Gastrocnemius medialis (tissue), 4 donors: ENCODE measurements at regions of chr12 and their contacts with region 1.

Region 1: DNA sequence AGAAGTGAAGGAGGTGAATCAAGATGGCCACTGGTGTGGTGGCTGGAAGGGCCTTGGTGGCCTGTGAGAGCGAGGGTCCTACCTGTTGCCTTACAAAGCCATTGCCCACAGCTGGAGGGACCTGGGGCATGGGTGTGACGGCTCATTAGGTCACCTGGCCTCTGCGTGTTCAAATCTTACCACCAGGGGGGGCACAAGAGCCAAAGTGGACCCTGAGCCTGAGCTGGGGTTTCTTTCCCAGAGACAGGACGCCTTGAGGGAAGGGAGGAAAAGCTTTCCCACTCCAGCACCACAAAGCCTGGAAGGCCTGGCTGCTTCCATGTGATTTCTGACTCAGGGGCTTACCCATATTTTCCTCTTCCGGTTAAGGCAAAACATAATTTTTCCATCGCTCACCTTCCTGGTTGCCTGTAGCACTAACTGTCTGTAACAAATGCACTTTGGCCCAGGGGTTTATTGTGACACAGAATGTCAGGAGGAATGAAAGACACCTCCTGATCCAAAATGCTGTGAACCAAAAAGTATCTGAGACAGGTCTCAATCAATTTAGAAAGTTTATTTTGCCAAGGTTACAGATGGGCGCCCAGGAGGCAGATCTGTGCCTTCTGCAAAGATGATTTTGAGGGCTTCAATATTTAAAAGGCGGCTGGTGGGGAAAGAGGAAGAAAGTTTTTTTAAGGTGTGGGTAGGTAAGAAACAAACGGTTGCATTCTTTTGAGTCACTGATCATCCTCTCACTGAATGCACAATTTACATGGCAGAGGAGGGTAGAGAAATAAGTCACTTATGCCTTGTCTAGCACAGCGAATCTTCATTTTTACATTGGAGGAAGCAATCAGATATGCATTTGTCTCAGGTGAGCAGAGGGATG is 4.3 kb upstream of the CD9 start:
- DNase-seq: peak; percentile 70 to 84
- ATAC-seq: peak; percentile 91 to 92
- H3K4me3 ChIP-seq: no peak overlapping the region
- H3K27ac ChIP-seq: peak overlapping the region; percentile 21 to 66 (median 57)
- H3K4me1 ChIP-seq: peaks cover 4 to 5% of the 10 kb centered on the region in 2 donors
- H3K27me3 ChIP-seq: no peaks in the 10 kb centered on the region
- CTCF ChIP-seq: peak; percentile 95 to 97 (median 96)
- POLR2A ChIP-seq: no peak

Region 2: DNA sequence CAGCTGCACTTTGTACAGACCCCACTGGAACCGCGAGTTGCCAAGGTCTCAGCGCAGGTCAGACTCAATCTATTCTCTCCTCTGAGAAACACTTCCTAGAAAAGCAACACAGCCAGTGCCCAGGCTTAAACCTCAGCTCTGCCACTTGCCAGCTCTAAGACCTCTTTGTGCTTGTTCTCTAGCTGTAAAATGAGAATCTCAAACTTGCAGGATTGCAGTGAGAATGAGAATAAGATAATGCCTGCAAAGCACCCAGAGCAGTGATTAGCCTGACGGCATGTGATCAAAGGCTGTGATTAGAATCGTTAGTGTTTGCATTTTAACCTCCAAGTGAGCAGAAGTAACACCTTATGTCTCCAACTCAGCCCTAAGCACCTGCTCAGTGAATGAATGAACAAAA is 272.1 kb before region 1 on chr12:
- in situ Hi-C with region 1: no loop called
- intact Hi-C with region 1: no loop called
- DNase-seq: no peak
- ATAC-seq: no peak
- H3K4me3 ChIP-seq: no peak overlapping the region
- H3K27ac ChIP-seq: no peak overlapping the region
- H3K4me1 ChIP-seq: no peaks in the 10 kb centered on the region
- H3K27me3 ChIP-seq: no peaks in the 10 kb centered on the region
- CTCF ChIP-seq: no peak
- POLR2A ChIP-seq: no peak

Region 3: GRCh38 chr12:5988659-5989116 is 207.2 kb before region 1 on chr12:
- in situ Hi-C with region 1: no loop called
- intact Hi-C with region 1: loop called (anchors 10 kb)
- DNase-seq: peak; percentile 22 to 48
- ATAC-seq: peak; percentile 74 to 85
- H3K4me3 ChIP-seq: no peak overlapping the region
- H3K27ac ChIP-seq: no peak overlapping the region
- H3K4me1 ChIP-seq: peaks cover 0 to 3% of the 10 kb centered on the region in 2 donors
- H3K27me3 ChIP-seq: no peaks in the 10 kb centered on the region
- CTCF ChIP-seq: peak; percentile 82 to 94 (median 86)
- POLR2A ChIP-seq: no peak

Region 4: DNA sequence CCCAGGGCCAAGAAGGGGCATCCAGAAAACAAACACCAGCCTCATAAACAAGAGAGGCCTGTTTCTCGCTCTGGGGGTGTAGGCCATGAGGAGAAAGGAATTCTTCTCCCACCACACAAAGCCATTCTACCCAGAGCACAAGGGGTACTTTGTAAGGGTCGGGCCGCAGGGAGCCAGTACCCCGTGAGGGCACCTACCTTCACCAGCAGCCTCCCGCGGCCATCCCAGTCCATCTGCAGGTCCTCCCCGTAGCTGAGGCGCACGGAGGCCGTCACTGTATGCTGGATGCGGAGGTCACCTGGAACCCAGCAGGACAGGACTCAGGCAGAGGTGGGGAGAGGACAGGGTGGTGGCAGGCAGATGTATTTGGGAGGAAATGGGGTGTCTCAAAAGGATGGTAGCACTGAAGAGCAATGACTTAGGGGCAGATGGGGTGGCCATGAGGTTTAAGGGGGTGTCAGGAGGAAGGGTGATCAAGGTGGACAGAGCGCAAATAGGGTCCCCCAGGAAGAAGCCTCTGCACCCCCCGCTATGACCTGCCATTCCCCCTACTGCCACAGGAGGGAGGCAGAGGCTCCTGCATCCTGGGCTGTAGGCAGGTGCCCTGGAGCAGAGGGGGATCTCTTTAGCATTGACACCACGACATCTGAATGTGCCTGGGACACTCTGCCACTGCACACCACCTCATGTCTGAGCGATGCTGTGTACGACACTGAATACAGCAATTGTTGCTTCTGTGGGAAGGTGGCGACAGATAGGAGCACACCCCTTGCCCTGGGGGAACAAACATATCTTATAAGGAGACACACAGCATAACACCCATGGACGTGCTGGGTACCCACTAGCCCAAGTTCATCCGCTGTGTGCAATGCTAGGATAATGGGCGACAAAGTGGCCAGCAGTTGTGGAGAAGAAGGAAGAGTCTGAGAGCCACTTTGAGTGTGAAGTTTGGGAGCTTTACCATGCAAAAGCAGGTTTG is 132.9 kb before region 1 on chr12:
- in situ Hi-C with region 1: loop called in 1 of 4 experiments (anchors 10 kb)
- intact Hi-C with region 1: loop called (anchors 2 kb)
- DNase-seq: peak in 1 of 2 donors; percentile 15
- ATAC-seq: peak; percentile 45 to 54
- H3K4me3 ChIP-seq: no peak overlapping the region
- H3K27ac ChIP-seq: no peak overlapping the region
- H3K4me1 ChIP-seq: no peaks in the 10 kb centered on the region
- H3K27me3 ChIP-seq: no peaks in the 10 kb centered on the region
- CTCF ChIP-seq: peak; percentile 67 to 77 (median 75)
- POLR2A ChIP-seq: no peak

Region 5: GRCh38 chr12:6233121-6233971 is 37.4 kb after region 1 on chr12:
- in situ Hi-C with region 1: no loop called
- intact Hi-C with region 1: loop called (anchors 2 kb)
- DNase-seq: peak; percentile 82 to 93
- ATAC-seq: peak; percentile 71 to 73
- H3K4me3 ChIP-seq: peak overlapping the region in 3 of 4 donors; percentile 4 to 36 (median 26)
- H3K27ac ChIP-seq: peak overlapping the region; percentile 82 to 89 (median 86)
- H3K4me1 ChIP-seq: peaks cover 59 to 77% of the 10 kb centered on the region in 2 donors
- H3K27me3 ChIP-seq: no peaks in the 10 kb centered on the region
- CTCF ChIP-seq: no peak
- POLR2A ChIP-seq: peak; percentile 35 to 53

Region 6: GRCh38 chr12:6278439-6279255 is 82.7 kb after region 1 on chr12:
- in situ Hi-C with region 1: loop called in 1 of 4 experiments (anchors 5 kb)
- intact Hi-C with region 1: loop called (anchors 1 kb)
- DNase-seq: peak; percentile 66 to 82
- ATAC-seq: peak; percentile 81 to 89
- H3K4me3 ChIP-seq: peak overlapping the region; percentile 53 to 74 (median 54)
- H3K27ac ChIP-seq: peak overlapping the region; percentile 79 to 98 (median 90)
- H3K4me1 ChIP-seq: peaks cover 19 to 30% of the 10 kb centered on the region in 2 donors
- H3K27me3 ChIP-seq: no peaks in the 10 kb centered on the region
- CTCF ChIP-seq: peak in 4 of 5 experiments; percentile 73 to 100 (median 100)
- POLR2A ChIP-seq: peak; percentile 64 to 67

Region 7: DNA sequence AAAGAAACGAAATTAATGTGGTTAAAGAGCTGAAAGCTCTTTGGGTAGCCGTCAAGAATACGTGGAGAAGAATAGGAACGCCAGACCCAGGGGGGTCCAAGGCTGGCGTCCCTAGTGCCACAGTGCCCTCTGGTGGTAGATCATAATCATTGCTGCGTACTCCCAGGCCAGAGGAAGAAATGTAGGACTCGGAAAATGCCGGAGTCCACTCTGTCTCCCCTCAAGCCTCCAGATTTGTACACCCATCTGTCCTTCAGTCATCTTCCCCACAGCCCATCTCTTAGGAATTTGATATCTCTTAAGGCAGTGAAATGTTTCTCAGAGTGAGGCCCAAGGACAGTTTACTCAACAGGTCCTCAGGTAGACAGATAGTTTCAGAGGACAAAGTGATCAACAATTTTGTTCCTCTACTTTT is 89.2 kb after region 1 on chr12:
- in situ Hi-C with region 1: loop called in 3 of 4 experiments (anchors 5 kb)
- intact Hi-C with region 1: loop called (anchors 1 kb)
- DNase-seq: peak; percentile 19 to 53
- ATAC-seq: peak; percentile 75 to 89
- H3K4me3 ChIP-seq: no peak overlapping the region
- H3K27ac ChIP-seq: no peak overlapping the region
- H3K4me1 ChIP-seq: peaks cover 0 to 4% of the 10 kb centered on the region in 2 donors
- H3K27me3 ChIP-seq: peaks cover 0 to 2% (median 0%) of the 10 kb centered on the region in 3 donors
- CTCF ChIP-seq: peak; percentile 88 to 95 (median 92)
- POLR2A ChIP-seq: no peak

Region 8: DNA sequence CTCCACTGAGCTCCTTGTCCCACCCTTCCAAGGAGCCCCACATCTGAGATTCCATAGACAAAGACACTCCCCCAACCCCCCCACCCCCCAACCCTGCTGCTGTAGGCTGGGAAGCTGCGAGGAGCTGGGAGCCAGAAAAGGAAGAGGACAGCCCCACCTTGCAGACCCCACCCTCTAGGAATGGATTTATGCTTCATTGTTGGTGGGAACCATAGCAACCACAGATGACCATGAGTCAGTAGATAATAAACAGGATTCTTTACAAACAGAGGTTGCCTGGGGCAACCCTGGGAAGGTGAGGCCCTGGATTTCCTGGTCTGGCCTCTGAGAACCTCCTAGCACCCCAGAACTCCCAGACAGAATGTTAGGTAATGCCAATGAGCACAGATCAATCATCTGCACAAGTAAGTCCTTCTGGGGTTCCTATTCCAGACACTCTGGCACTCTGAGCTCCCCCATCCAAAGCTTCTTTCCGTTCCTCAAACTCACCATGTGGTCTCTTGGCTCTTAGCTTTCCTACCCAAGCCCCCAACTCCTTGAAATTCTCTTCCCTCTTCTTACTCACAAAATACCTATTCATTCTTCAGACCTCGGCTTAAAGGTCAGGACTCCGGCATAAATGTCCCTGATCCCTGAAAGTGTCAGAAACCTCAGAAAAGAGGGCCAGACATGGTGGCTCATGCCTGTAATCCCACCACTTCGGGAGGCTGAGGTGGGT is 99.4 kb after region 1 on chr12:
- in situ Hi-C with region 1: no loop called
- intact Hi-C with region 1: no loop called
- DNase-seq: no peak
- ATAC-seq: peak; percentile 36 to 49
- H3K4me3 ChIP-seq: no peak overlapping the region
- H3K27ac ChIP-seq: no peak overlapping the region
- H3K4me1 ChIP-seq: no peaks in the 10 kb centered on the region
- H3K27me3 ChIP-seq: no peaks in the 10 kb centered on the region
- CTCF ChIP-seq: no peak
- POLR2A ChIP-seq: no peak